Caco-2 (cell line): ENCODE measurements at regions of chr13 and their contacts with region 1.

Region 1: GRCh38 chr13:90455823-90456222 is 891.7 kb upstream of the MIR17HG start:
- DNase-seq: peak in 1 of 2 experiments; percentile 15
- H3K4me3 ChIP-seq: no peak overlapping the region
- H3K4me3 Mint-ChIP-seq: no peak overlapping the region
- H3K27ac Mint-ChIP-seq: no peak overlapping the region
- H3K4me1 ChIP-seq: no peaks in the 10 kb centered on the region
- H3K4me1 Mint-ChIP-seq: no peaks in the 10 kb centered on the region
- H3K27me3 ChIP-seq: no peaks in the 10 kb centered on the region
- H3K27me3 Mint-ChIP-seq: no peaks in the 10 kb centered on the region
- CTCF ChIP-seq: peak; percentile 35 to 44

Region 2: DNA sequence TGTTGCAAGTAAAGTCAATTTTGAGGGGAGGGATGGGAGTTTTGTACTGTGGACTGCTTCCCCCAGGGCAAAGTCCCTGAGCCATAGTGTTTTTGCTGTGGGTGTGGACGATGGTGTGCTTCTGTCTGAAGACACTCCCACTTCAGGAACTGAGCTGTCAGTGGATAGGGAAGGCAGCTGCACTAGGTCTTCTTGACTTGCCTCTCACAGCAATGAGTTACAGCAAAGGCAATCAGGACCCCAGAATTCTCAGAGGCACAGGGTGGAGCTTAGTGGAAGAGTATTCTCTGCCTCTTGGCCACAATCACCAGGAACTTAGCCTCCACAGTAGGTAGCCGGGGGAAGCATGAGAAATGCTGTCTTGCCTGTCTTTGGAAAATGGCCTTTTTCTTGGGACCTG is 525.0 kb before region 1 on chr13:
- CTCF ChIA-PET with region 1: no interaction called
- POLR2A ChIA-PET with region 1: no interaction called
- intact Hi-C with region 1: no loop called
- DNase-seq: peak; percentile 25 to 43
- H3K4me3 ChIP-seq: no peak overlapping the region
- H3K4me3 Mint-ChIP-seq: peak overlapping the region; percentile 42
- H3K27ac Mint-ChIP-seq: no peak overlapping the region
- H3K4me1 ChIP-seq: peaks cover 11% of the 10 kb centered on the region; the same call in 1 of the 2 replicates
- H3K4me1 Mint-ChIP-seq: peaks cover 9% of the 10 kb centered on the region
- H3K27me3 ChIP-seq: no peaks in the 10 kb centered on the region
- H3K27me3 Mint-ChIP-seq: no peaks in the 10 kb centered on the region
- CTCF ChIP-seq: no peak

Region 3: DNA sequence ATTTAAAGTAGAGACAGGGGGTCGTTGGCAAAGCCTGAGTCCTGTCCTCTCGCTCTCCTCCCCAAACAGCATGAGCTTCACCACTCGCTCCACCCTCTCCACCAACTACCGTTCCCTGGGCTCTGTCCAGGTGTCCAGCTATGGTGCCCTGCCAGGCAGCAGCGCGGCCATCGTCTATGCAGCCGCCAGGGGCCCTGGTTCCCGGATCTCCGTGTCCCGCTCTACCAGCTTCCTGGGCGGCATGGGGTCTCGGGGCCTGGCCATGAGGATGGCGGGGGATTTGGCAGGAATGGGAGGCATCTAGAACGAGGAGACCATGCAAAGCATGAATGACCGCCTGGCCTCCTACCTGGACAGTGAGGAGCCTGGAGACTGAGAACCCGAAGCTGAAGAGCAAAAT is 225.5 kb before region 1 on chr13:
- CTCF ChIA-PET with region 1: no interaction called
- POLR2A ChIA-PET with region 1: no interaction called
- intact Hi-C with region 1: no loop called
- DNase-seq: no peak
- H3K4me3 ChIP-seq: no peak overlapping the region
- H3K4me3 Mint-ChIP-seq: no peak overlapping the region
- H3K27ac Mint-ChIP-seq: no peak overlapping the region
- H3K4me1 ChIP-seq: no peaks in the 10 kb centered on the region
- H3K4me1 Mint-ChIP-seq: no peaks in the 10 kb centered on the region
- H3K27me3 ChIP-seq: no peaks in the 10 kb centered on the region
- H3K27me3 Mint-ChIP-seq: no peaks in the 10 kb centered on the region
- CTCF ChIP-seq: no peak

Region 4: GRCh38 chr13:90787007-90787406 is 331.2 kb after region 1 on chr13:
- CTCF ChIA-PET with region 1: no interaction called
- POLR2A ChIA-PET with region 1: no interaction called
- intact Hi-C with region 1: loop called (anchors 5 kb)
- DNase-seq: no peak
- H3K4me3 ChIP-seq: no peak overlapping the region
- H3K4me3 Mint-ChIP-seq: no peak overlapping the region
- H3K27ac Mint-ChIP-seq: no peak overlapping the region
- H3K4me1 ChIP-seq: no peaks in the 10 kb centered on the region
- H3K4me1 Mint-ChIP-seq: no peaks in the 10 kb centered on the region
- H3K27me3 ChIP-seq: no peaks in the 10 kb centered on the region
- H3K27me3 Mint-ChIP-seq: peaks cover 3% of the 10 kb centered on the region
- CTCF ChIP-seq: no peak